CD4-positive, alpha-beta memory T cell (primary cell): ENCODE measurements at regions of chr6 and their contacts with region 1.

Region 1: GRCh38 chr6:169212897-169213813 is 40.5 kb downstream of the THBS2 start:
- DNase-seq: peak; percentile 82 to 94 (median 93)
- H3K4me3 ChIP-seq: peak overlapping the region in 1 of 2 donors; percentile 36
- H3K4me3 Mint-ChIP-seq: peak overlapping the region; percentile 44 to 84 (median 70)
- H3K27ac ChIP-seq: peak overlapping the region; percentile 32
- H3K27ac Mint-ChIP-seq: peak overlapping the region in 6 of 7 donors; percentile 65 to 95 (median 86)
- H3K4me1 ChIP-seq: peaks cover 10% of the 10 kb centered on the region
- H3K4me1 Mint-ChIP-seq: peaks cover 6 to 12% (median 8%) of the 10 kb centered on the region in 4 donors
- H3K27me3 ChIP-seq: no peaks in the 10 kb centered on the region
- H3K27me3 Mint-ChIP-seq: no peaks in the 10 kb centered on the region

Region 2: DNA sequence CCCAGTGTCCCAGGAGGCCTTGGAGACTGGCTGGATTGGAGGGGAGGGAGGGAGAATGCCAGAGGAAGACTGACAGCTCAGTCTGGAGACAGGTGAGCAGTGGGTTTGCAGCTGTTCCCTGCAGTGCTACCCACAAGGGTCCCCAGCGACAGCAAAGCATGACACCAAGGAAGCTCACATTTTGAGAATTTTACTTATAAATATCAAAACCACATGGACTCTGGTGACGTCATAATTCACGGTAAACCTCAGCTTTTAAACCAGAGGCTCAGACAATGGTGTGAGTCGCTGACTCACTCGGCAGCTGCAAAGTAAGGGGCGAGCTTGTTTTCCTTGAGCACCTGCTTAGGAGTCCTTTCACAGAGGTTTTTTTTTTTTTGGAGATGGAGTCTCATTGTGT is 24.7 kb before region 1 on chr6:
- CTCF ChIA-PET with region 1: no interaction called
- POLR2A ChIA-PET with region 1: no interaction called
- intact Hi-C with region 1: no loop called
- DNase-seq: no peak
- H3K4me3 ChIP-seq: no peak overlapping the region
- H3K4me3 Mint-ChIP-seq: no peak overlapping the region
- H3K27ac ChIP-seq: no peak overlapping the region
- H3K27ac Mint-ChIP-seq: no peak overlapping the region
- H3K4me1 ChIP-seq: no peaks in the 10 kb centered on the region
- H3K4me1 Mint-ChIP-seq: peaks cover 0 to 4% (median 2%) of the 10 kb centered on the region in 4 donors
- H3K27me3 ChIP-seq: no peaks in the 10 kb centered on the region
- H3K27me3 Mint-ChIP-seq: peaks cover 6 to 7% of the 10 kb centered on the region in 2 donors

Region 3: DNA sequence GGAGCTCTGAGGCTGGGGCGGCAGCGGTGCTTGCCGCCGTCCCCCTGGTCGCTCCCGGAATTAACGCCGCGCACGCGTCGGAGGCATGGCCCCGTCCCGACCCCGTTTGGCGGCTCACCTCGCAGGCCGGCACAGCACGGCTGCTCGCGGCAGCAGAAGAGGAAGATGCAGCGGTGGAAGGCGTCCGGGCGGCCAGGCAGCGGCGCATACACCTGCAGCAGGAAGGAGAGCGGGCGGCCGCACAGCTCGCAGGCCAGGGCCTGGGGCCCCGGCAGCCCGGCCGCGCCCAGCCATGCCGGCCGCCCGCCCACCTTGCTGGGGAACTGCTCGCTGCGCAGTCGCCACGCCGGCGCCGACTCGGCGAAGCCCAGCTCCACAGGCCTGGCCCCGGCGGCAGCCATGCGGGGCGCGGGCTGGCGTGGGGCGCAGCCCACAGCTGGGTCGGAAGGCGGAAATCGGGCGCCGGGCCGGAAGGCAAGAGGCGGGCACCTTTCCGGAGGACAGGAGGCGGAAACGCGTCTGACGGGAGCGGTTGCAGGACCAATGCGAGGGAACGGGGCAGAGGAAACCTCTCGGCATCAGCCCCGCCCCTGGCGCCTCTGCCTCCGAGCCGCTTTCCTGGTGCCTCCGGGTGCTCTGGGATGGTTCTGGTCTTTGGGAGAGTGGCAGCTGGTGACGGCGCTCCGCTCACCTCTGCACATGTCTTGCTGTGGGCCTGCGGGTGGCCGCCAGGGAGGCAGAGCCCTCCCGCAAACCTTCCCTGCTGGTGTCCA is 1371.2 kb after region 1 on chr6 and contains the start of gene PDCD2:
- CTCF ChIA-PET with region 1: no interaction called
- POLR2A ChIA-PET with region 1: no interaction called
- intact Hi-C with region 1: loop called (anchors 10 kb)
- DNase-seq: peak; percentile 89 to 94 (median 92)
- H3K4me3 ChIP-seq: peak within 1 kb of the TSS; percentile 71 to 92
- H3K4me3 Mint-ChIP-seq: peak within 1 kb of the TSS; percentile 96 to 98 (median 97)
- H3K27ac ChIP-seq: peak within 1 kb of the TSS; percentile 87
- H3K27ac Mint-ChIP-seq: peak within 1 kb of the TSS; percentile 96 to 99 (median 98)
- H3K4me1 ChIP-seq: peaks cover 27% of the 10 kb centered on the region
- H3K4me1 Mint-ChIP-seq: peaks cover 18 to 46% (median 33%) of the 10 kb centered on the region in 4 donors
- H3K27me3 ChIP-seq: no peaks in the 10 kb centered on the region
- H3K27me3 Mint-ChIP-seq: peaks cover 0 to 3% of the 10 kb centered on the region in 2 donors
- total RNA-seq, gene PDCD2: 75.2 to 78.2 TPM